Transverse colon (tissue), 4 donors: ENCODE measurements at regions of chr9 and their contacts with region 1.

Region 1: GRCh38 chr9:127943731-127944144 is 6.1 kb upstream of the DPM2 start:
- DNase-seq: peak; percentile 87
- H3K4me3 ChIP-seq: no peak overlapping the region
- H3K27ac ChIP-seq: peak overlapping the region in 3 of 4 donors; percentile 2 to 37 (median 35)
- H3K4me1 ChIP-seq: peaks cover 0 to 5% (median 0%) of the 10 kb centered on the region in 4 donors
- H3K27me3 ChIP-seq: no peaks in the 10 kb centered on the region
- CTCF ChIP-seq: peak; percentile 89 to 97 (median 94)
- EP300 ChIP-seq: no peak
- POLR2A ChIP-seq: no peak

Region 2: GRCh38 chr9:127450830-127451724 is 492.7 kb before region 1 on chr9 and contains the starts of genes LRSAM1 and RPL12:
- in situ Hi-C with region 1: no loop called
- intact Hi-C with region 1: no loop called
- DNase-seq: peak; percentile 97
- H3K4me3 ChIP-seq: peak within 1 kb of the TSS; percentile 61 to 92 (median 66)
- H3K27ac ChIP-seq: peak within 1 kb of the TSS; percentile 94 to 98 (median 94)
- H3K4me1 ChIP-seq: peaks cover 20 to 41% (median 35%) of the 10 kb centered on the region in 4 donors
- H3K27me3 ChIP-seq: no peaks in the 10 kb centered on the region
- CTCF ChIP-seq: peak in 2 of 5 experiments; percentile 11 to 25
- EP300 ChIP-seq: no peak
- POLR2A ChIP-seq: peak; percentile 100
- total RNA-seq, gene LRSAM1: 16.2 to 39.2 (median 26.2) TPM
- total RNA-seq, gene RPL12: 1,054 to 2,042 (median 1,540) TPM

Region 3: GRCh38 chr9:127980706-127981558 is 37.2 kb after region 1 on chr9 and contains the start of gene EEIG1:
- in situ Hi-C with region 1: no loop called
- intact Hi-C with region 1: loop called (anchors 5 kb)
- DNase-seq: peak; percentile 98
- H3K4me3 ChIP-seq: peak within 1 kb of the TSS; percentile 74 to 91 (median 90)
- H3K27ac ChIP-seq: peak within 1 kb of the TSS; percentile 94 to 98 (median 98)
- H3K4me1 ChIP-seq: peaks cover 20 to 41% (median 38%) of the 10 kb centered on the region in 4 donors
- H3K27me3 ChIP-seq: no peaks in the 10 kb centered on the region
- CTCF ChIP-seq: no peak
- EP300 ChIP-seq: no peak
- POLR2A ChIP-seq: peak; percentile 87
- total RNA-seq, gene EEIG1: 77.0 to 230 (median 96.7) TPM

Region 4: GRCh38 chr9:128081056-128081455 is 137.3 kb after region 1 on chr9:
- in situ Hi-C with region 1: no loop called
- intact Hi-C with region 1: no loop called
- DNase-seq: no peak
- H3K4me3 ChIP-seq: no peak overlapping the region
- H3K27ac ChIP-seq: peak overlapping the region; percentile 70 to 89 (median 74)
- H3K4me1 ChIP-seq: peaks cover 37 to 79% (median 48%) of the 10 kb centered on the region in 4 donors
- H3K27me3 ChIP-seq: no peaks in the 10 kb centered on the region
- CTCF ChIP-seq: no peak
- EP300 ChIP-seq: no peak
- POLR2A ChIP-seq: no peak

Region 5: DNA sequence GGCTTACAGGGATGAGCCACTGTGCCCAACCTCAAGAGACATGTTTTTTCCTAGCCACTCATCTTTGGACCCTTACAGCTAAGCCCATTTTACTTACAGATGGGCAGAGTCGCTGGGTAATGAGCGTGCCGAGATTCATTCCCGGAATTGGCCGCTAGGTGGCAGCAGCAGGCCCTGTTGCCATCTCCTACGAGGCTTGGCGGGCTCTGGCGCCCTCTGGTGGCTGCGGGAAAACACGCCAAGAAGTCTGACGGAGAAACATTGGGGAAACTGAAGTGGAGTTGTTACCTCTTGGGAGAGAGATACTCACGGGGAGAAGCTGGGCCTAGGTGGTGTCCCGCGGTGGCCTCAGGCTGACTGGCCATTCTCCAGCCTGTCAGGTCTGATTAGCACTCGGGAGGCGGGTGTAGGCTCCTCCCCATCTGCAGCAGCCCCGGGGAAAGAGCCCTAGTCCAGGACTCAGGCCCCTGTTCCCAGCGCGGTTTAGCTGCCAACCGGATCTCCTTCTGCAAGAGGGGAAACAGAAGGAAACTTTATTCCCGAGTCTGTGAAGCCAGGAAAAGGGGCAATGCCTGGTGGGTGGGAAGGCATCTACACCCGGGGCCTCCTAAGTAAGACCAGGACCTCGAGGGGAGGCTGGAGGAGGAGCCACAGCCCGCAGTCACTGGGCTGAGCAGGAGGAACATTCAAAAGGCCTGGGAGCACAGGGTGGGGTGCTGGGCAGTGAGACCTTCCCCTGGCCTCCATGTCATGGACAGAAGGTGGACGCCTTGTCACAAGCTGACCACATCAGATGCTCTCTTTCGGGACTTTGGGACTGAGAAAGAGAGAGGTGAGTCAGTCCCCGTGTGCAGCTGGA is 174.1 kb after region 1 on chr9:
- in situ Hi-C with region 1: no loop called
- intact Hi-C with region 1: loop called (anchors 2 kb)
- DNase-seq: peak; percentile 97
- H3K4me3 ChIP-seq: no peak overlapping the region
- H3K27ac ChIP-seq: peak overlapping the region; percentile 84 to 96 (median 94)
- H3K4me1 ChIP-seq: peaks cover 3 to 32% (median 27%) of the 10 kb centered on the region in 4 donors
- H3K27me3 ChIP-seq: no peaks in the 10 kb centered on the region
- CTCF ChIP-seq: peak; percentile 100
- EP300 ChIP-seq: no peak
- POLR2A ChIP-seq: no peak